ENCODE measurements at regions of chr16 and their contacts with region 1.

Region 1: DNA sequence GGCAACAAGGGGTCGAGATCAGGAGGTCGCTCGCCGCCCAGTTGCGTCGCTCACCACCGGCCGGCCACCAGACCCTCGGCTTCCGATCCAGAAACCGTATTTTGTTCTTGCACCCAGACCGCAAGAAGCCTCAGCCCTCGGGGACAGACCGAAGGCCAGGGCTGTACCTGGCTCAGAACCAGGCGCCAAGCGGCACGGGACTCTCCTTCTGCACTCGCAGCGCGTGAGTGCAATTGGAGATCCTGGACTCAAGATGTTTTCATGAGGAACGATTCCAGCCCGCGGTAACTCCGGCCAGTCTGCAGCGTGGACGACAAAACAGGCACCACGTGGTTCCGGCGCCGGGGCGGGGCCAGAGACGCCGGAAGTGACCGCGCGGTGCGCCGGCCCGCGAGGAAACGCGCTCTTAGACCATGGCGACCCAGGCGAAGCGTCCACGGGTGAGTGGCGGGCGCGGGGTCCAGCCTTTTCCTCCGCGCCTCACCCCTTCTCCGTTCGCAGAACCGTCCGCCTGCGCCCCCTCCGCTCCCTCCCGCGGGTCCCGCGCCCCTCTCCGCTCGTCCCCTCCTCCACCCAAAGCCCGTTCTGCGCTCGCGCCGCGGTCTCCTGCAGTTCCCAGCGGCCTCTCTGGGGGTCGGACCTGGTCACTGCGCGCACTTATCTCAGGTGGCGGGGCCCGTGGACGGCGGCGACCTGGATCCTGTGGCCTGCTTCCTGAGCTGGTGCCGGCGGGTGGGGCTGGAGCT is at the start of gene SETD6:
- DNase-seq: peak; percentile 83
- ATAC-seq: peak; percentile 86
- H3K4me3 ChIP-seq: peak within 1 kb of the TSS; percentile 58 to 91 (median 80)
- H3K27ac ChIP-seq: peak within 1 kb of the TSS; percentile 76
- H3K4me1 ChIP-seq: peaks cover 32% of the 10 kb centered on the region
- H3K27me3 ChIP-seq: no peaks in the 10 kb centered on the region
- CTCF ChIP-seq: peak; percentile 46
- EP300 ChIP-seq: no peak
- POLR2A ChIP-seq: peak; percentile 84 to 97
- RAD21 ChIP-seq: peak; percentile 42; the same call in 1 of the 2 replicates
- total RNA-seq, gene SETD6: 17.4 and 25.7 TPM in 2 replicates

Region 2: DNA sequence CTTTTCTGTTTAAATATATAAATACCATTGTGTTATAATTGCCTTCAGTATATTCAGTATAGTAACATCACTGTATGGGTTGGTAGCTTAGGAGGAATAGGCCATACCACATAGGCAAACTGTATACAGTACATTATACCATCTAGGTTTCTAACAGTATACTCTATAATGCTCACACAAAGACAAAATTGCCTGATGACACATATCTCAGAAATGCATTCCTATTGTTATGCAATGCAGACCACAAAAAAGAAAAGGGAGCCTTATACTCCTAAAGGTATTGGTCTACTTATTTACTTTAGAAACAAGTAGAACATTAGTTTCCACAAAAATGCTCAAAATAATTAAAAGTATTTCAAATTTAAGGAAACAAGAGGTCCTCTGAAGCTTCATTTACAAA is 47.9 kb after region 1 on chr16:
- CTCF ChIA-PET with region 1: no interaction called
- POLR2A ChIA-PET with region 1: no interaction called
- in situ Hi-C with region 1: no loop called
- intact Hi-C with region 1: loop called (anchors 10 kb)
- DNase-seq: no peak
- ATAC-seq: no peak
- H3K4me3 ChIP-seq: no peak overlapping the region
- H3K27ac ChIP-seq: no peak overlapping the region
- H3K4me1 ChIP-seq: no peaks in the 10 kb centered on the region
- H3K27me3 ChIP-seq: no peaks in the 10 kb centered on the region
- CTCF ChIP-seq: no peak
- EP300 ChIP-seq: no peak
- POLR2A ChIP-seq: no peak
- RAD21 ChIP-seq: no peak

Region 3: GRCh38 chr16:58589326-58589905 is 74.1 kb after region 1 on chr16:
- CTCF ChIA-PET with region 1: no interaction called
- POLR2A ChIA-PET with region 1: no interaction called
- in situ Hi-C with region 1: no loop called
- intact Hi-C with region 1: no loop called
- DNase-seq: no peak
- ATAC-seq: no peak
- H3K4me3 ChIP-seq: no peak overlapping the region
- H3K27ac ChIP-seq: no peak overlapping the region
- H3K4me1 ChIP-seq: peaks cover 20% of the 10 kb centered on the region
- H3K27me3 ChIP-seq: no peaks in the 10 kb centered on the region
- CTCF ChIP-seq: no peak
- EP300 ChIP-seq: no peak
- POLR2A ChIP-seq: no peak
- RAD21 ChIP-seq: no peak

Region 4: DNA sequence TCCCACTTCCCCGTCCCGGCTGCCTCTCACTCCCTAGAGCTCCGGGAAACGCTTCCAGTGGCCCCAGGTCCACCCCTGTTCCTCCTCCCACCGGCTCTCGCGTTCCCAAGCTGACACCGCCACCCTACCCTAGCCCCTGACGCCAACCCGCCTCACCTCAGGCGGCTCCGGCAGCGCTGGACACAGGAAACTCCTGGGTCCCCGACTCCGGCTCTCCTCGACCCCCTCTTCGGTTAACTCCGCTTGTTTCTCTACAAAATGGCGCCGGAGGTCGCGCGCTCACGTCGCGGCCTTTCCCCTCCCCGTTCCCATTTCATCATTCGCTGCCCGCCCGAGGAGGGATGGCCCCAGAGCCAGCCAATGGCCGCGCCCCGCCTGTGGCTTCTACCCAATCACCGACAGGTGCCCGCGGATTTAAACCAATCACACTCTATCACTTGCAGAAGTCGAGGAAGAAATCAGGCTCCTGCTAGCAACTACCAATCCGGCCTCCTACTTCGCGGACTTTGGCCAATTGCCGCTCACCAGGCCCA is 114.3 kb after region 1 on chr16 and contains the start of gene CNOT1:
- CTCF ChIA-PET with region 1: no interaction called
- POLR2A ChIA-PET with region 1: interaction called, 5 read pairs
- in situ Hi-C with region 1: loop called (anchors 10 kb)
- intact Hi-C with region 1: no loop called
- DNase-seq: peak; percentile 100
- ATAC-seq: peak; percentile 93
- H3K4me3 ChIP-seq: peak within 1 kb of the TSS; percentile 94 to 100 (median 98)
- H3K27ac ChIP-seq: peak within 1 kb of the TSS; percentile 96
- H3K4me1 ChIP-seq: peaks cover 39% of the 10 kb centered on the region
- H3K27me3 ChIP-seq: no peaks in the 10 kb centered on the region; a peak in 1 of 5 replicates
- CTCF ChIP-seq: no peak
- EP300 ChIP-seq: peak in 1 of 2 experiments; percentile 14; a peak in 1 of 4 replicates
- POLR2A ChIP-seq: peak; percentile 85 to 87
- RAD21 ChIP-seq: no peak
- total RNA-seq, gene CNOT1: 188 and 399 TPM in 2 replicates

Region 5: DNA sequence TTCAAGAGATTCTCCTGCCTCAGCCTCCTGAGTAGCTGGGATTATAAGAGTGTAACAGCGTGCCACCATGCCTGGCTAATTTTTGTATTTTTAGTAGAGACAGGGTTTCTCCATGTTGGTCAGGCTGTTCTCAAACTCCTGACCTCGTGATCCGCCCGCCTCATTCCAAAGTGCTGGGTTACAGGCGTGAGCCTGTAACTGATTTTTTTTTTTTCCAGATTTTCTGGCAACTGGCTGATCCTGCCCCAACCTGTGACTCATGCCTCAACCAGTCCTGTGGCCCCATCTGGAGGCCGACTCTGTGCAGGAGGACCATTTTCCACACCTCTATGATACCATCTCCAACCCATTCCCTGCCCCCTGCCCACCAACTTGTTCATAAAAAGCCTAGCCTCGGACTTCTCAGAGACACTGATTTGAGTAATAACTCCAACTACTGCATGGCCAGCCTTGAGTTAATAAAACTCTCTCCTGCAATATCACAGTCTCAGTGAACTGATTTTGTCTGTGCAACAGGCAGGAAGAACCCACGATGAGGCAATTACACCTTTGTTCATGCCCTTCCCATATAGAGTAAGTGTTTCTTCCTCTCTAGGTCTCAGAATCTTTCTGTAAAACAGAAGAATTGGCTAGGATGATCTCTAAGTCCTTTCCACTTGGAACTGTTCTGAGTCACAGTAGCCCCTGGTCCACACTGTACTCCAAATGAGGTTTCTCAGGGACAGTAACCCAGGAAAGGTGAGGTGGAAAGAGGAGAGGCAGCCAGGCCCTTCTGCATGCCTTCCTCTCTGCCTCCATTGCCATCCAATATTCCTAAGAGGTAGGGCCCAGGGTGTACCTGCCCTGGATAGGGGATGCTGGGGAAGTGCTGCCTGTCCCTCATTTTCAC is 123.1 kb after region 1 on chr16:
- CTCF ChIA-PET with region 1: interaction called, 18 read pairs
- POLR2A ChIA-PET with region 1: interaction called, 3 read pairs
- in situ Hi-C with region 1: loop called (anchors 10 kb)
- intact Hi-C with region 1: loop called (anchors 1 kb)
- DNase-seq: peak; percentile 79
- ATAC-seq: peak; percentile 94
- H3K4me3 ChIP-seq: no peak overlapping the region
- H3K27ac ChIP-seq: no peak overlapping the region
- H3K4me1 ChIP-seq: peaks cover 50% of the 10 kb centered on the region
- H3K27me3 ChIP-seq: no peaks in the 10 kb centered on the region; a peak in 1 of 5 replicates
- CTCF ChIP-seq: peak; percentile 89
- EP300 ChIP-seq: no peak
- POLR2A ChIP-seq: no peak
- RAD21 ChIP-seq: peak; percentile 88

Region 6: GRCh38 chr16:58661199-58661830 is 146.0 kb after region 1 on chr16:
- CTCF ChIA-PET with region 1: interaction called, 18 read pairs
- POLR2A ChIA-PET with region 1: interaction called, 6 read pairs
- in situ Hi-C with region 1: no loop called
- intact Hi-C with region 1: loop called (anchors 1 kb)
- DNase-seq: peak; percentile 85
- ATAC-seq: peak; percentile 89
- H3K4me3 ChIP-seq: no peak overlapping the region
- H3K27ac ChIP-seq: no peak overlapping the region
- H3K4me1 ChIP-seq: peaks cover 23% of the 10 kb centered on the region
- H3K27me3 ChIP-seq: no peaks in the 10 kb centered on the region
- CTCF ChIP-seq: peak; percentile 93
- EP300 ChIP-seq: no peak
- POLR2A ChIP-seq: no peak
- RAD21 ChIP-seq: peak; percentile 91